CD4-positive, alpha-beta memory T cell (primary cell): ENCODE measurements at regions of chr13 and their contacts with region 1.

Region 1: GRCh38 chr13:20475927-20476691 is 49.5 kb downstream of the CRYL1 start:
- DNase-seq: peak; percentile 78 to 87 (median 85)
- H3K4me3 ChIP-seq: peak overlapping the region; percentile 26 to 39
- H3K4me3 Mint-ChIP-seq: peak overlapping the region; percentile 83 to 92 (median 87)
- H3K27ac ChIP-seq: peak overlapping the region; percentile 54
- H3K27ac Mint-ChIP-seq: peak overlapping the region; percentile 93 to 98 (median 96)
- H3K4me1 ChIP-seq: peaks cover 29% of the 10 kb centered on the region
- H3K4me1 Mint-ChIP-seq: peaks cover 23 to 44% (median 34%) of the 10 kb centered on the region in 4 donors
- H3K27me3 ChIP-seq: no peaks in the 10 kb centered on the region
- H3K27me3 Mint-ChIP-seq: no peaks in the 10 kb centered on the region

Region 2: GRCh38 chr13:20197361-20197834 is 278.7 kb before region 1 on chr13:
- CTCF ChIA-PET with region 1: interaction called, 4 read pairs
- POLR2A ChIA-PET with region 1: no interaction called
- intact Hi-C with region 1: loop called (anchors 5 kb)
- DNase-seq: peak in 4 of 5 donors; percentile 42 to 52 (median 49)
- H3K4me3 ChIP-seq: no peak overlapping the region
- H3K4me3 Mint-ChIP-seq: no peak overlapping the region
- H3K27ac ChIP-seq: no peak overlapping the region
- H3K27ac Mint-ChIP-seq: peak overlapping the region in 1 of 7 donors; percentile 2
- H3K4me1 ChIP-seq: peaks cover 22% of the 10 kb centered on the region
- H3K4me1 Mint-ChIP-seq: peaks cover 14 to 21% (median 16%) of the 10 kb centered on the region in 4 donors
- H3K27me3 ChIP-seq: peaks cover 41% of the 10 kb centered on the region
- H3K27me3 Mint-ChIP-seq: peaks cover 34 to 36% of the 10 kb centered on the region in 2 donors

Region 3: DNA sequence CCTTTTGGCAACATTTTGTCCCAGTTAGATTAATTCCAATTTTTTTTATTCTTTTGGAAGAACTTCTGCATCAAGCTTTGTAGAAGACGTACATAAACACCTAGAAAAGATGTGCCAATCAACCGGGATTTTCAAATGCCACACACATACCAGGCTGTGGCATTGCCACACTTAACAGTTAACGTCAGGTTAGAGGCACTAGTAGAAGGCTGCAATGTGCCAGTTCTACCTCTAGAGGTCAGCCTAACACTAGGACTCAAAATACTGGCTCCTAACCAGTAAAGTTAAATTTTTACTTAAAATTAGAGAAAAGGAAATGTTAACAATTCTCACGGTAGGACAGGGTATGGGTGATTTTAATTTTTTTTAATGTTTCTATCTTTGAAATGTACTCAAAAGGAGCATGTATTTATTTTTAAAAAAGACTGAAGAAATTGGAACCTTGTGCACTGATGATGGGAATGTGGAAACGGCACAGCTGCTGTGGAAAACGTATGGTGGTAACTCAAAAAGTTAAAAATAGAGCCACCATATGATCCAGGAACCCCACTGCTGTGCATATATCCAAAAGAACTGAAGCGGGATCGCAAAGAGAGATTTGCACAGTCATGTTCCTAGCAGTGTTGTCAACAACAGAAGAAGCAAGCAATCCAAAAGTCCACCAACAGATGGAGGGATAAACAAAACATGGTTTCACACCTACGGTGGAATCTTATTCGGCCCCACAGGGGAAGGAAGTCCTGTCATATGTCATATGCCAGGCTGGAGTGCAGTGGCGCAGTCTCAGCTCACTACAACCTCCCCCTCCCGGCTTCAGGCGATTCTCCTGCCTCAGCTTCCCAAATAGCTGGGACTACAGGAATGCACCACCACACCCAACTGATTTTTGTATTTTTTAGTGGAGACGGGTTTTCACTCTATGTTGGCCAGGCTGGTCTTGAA is 19.2 kb after region 1 on chr13:
- CTCF ChIA-PET with region 1: interaction called, 14 read pairs
- POLR2A ChIA-PET with region 1: interaction called, 4 read pairs
- intact Hi-C with region 1: loop called (anchors 1 kb)
- DNase-seq: peak; percentile 62 to 70 (median 68)
- H3K4me3 ChIP-seq: no peak overlapping the region
- H3K4me3 Mint-ChIP-seq: no peak overlapping the region
- H3K27ac ChIP-seq: no peak overlapping the region
- H3K27ac Mint-ChIP-seq: peak overlapping the region in 1 of 7 donors; percentile 32
- H3K4me1 ChIP-seq: peaks cover 6% of the 10 kb centered on the region
- H3K4me1 Mint-ChIP-seq: peaks cover 0 to 7% (median 2%) of the 10 kb centered on the region in 4 donors
- H3K27me3 ChIP-seq: no peaks in the 10 kb centered on the region
- H3K27me3 Mint-ChIP-seq: no peaks in the 10 kb centered on the region

Region 4: GRCh38 chr13:20566898-20567874 is 91.1 kb after region 1 on chr13 and contains the start of gene IFT88:
- CTCF ChIA-PET with region 1: interaction called, 3 read pairs
- POLR2A ChIA-PET with region 1: interaction called, 3 read pairs
- intact Hi-C with region 1: loop called (anchors 2 kb)
- DNase-seq: peak; percentile 78 to 86 (median 80)
- H3K4me3 ChIP-seq: peak within 1 kb of the TSS; percentile 56 to 61
- H3K4me3 Mint-ChIP-seq: peak within 1 kb of the TSS; percentile 92 to 95 (median 94)
- H3K27ac ChIP-seq: peak within 1 kb of the TSS; percentile 53
- H3K27ac Mint-ChIP-seq: peak within 1 kb of the TSS; percentile 92 to 96 (median 92)
- H3K4me1 ChIP-seq: peaks cover 16% of the 10 kb centered on the region
- H3K4me1 Mint-ChIP-seq: peaks cover 10 to 19% (median 14%) of the 10 kb centered on the region in 4 donors
- H3K27me3 ChIP-seq: no peaks in the 10 kb centered on the region
- H3K27me3 Mint-ChIP-seq: no peaks in the 10 kb centered on the region
- total RNA-seq, gene IFT88: 8.3 to 9.8 TPM

Region 5: GRCh38 chr13:20902438-20903163 is 426.5 kb after region 1 on chr13 and contains the start of gene XPO4:
- CTCF ChIA-PET with region 1: no interaction called
- POLR2A ChIA-PET with region 1: interaction called, 3 read pairs
- intact Hi-C with region 1: loop called (anchors 10 kb)
- DNase-seq: peak; percentile 77 to 81 (median 79)
- H3K4me3 ChIP-seq: peak within 1 kb of the TSS; percentile 97 to 98
- H3K4me3 Mint-ChIP-seq: peak within 1 kb of the TSS; percentile 93 to 98 (median 96)
- H3K27ac ChIP-seq: peak within 1 kb of the TSS; percentile 89
- H3K27ac Mint-ChIP-seq: peak within 1 kb of the TSS; percentile 89 to 98 (median 95)
- H3K4me1 ChIP-seq: peaks cover 34% of the 10 kb centered on the region
- H3K4me1 Mint-ChIP-seq: peaks cover 23 to 38% (median 29%) of the 10 kb centered on the region in 4 donors
- H3K27me3 ChIP-seq: no peaks in the 10 kb centered on the region
- H3K27me3 Mint-ChIP-seq: peaks cover 0 to 2% of the 10 kb centered on the region in 2 donors
- total RNA-seq, gene XPO4: 25.5 to 27.4 TPM